A673 (cell line): ENCODE measurements at regions of chr9 and their contacts with region 1.

Region 1: GRCh38 chr9:94867281-94867841 is 140.9 kb downstream of the AOPEP start:
- DNase-seq: peak; percentile 40
- H3K4me3 ChIP-seq: peak overlapping the region; percentile 11
- H3K27ac ChIP-seq: peak overlapping the region; percentile 95
- H3K4me1 ChIP-seq: peaks cover 67% of the 10 kb centered on the region
- H3K27me3 ChIP-seq: no peaks in the 10 kb centered on the region
- CTCF ChIP-seq: no peak

Region 2: GRCh38 chr9:94464790-94465189 is 402.6 kb before region 1 on chr9:
- CTCF ChIA-PET with region 1: no interaction called
- POLR2A ChIA-PET with region 1: no interaction called
- intact Hi-C with region 1: no loop called
- DNase-seq: no peak
- H3K4me3 ChIP-seq: no peak overlapping the region
- H3K27ac ChIP-seq: no peak overlapping the region
- H3K4me1 ChIP-seq: no peaks in the 10 kb centered on the region
- H3K27me3 ChIP-seq: no peaks in the 10 kb centered on the region
- CTCF ChIP-seq: no peak

Region 3: DNA sequence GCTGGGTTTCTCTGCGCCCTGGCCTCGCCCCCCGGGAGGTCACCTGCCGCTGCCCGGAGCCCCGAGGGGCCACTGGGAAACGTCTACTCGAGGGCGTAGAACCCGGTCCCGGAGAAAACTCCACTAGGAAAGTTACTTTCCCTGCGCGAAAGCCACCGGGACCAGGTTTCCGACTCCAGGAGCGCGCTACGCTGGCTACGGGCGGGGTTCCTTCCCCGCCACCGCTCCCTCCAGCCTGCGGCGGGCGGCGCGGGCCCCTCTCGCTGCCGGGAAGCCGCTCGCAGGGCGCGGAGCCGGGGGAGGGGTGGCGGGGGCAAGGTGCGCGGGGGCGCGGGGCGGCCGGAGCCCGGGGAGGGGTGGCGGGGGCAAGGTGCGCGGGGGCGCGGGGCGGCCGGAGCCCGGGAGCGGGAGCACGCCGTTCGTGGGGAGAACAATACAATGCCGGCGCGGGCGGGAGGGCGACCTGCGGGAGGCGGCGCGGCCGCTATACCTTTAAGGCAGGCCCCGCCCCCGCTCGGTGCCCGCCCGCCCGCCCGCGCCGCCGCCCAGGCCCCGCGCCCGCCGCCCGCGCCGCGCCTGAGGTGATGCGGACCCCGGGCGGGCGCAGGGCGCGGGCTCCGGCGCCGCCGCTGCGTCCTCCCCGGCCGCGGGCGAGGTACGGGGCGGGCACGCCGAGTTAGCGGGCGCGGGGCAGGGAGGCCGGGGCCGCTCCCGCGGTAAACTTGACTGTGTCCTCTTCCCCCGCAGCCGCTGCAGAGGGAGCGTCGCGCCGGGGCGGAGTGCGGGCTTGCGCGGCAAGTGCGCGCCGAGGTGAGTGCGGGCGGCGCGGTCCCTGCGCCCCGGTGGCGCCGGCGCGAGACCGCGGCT is 137.3 kb after region 1 on chr9:
- CTCF ChIA-PET with region 1: no interaction called
- POLR2A ChIA-PET with region 1: no interaction called
- intact Hi-C with region 1: loop called (anchors 5 kb)
- DNase-seq: peak; percentile 59
- H3K4me3 ChIP-seq: peak overlapping the region; percentile 78
- H3K27ac ChIP-seq: peak overlapping the region; percentile 77
- H3K4me1 ChIP-seq: peaks cover 16% of the 10 kb centered on the region
- H3K27me3 ChIP-seq: no peaks in the 10 kb centered on the region
- CTCF ChIP-seq: no peak